GM12878 (cell line): ENCODE measurements at regions of chr19 and their contacts with region 1.

Region 1: DNA sequence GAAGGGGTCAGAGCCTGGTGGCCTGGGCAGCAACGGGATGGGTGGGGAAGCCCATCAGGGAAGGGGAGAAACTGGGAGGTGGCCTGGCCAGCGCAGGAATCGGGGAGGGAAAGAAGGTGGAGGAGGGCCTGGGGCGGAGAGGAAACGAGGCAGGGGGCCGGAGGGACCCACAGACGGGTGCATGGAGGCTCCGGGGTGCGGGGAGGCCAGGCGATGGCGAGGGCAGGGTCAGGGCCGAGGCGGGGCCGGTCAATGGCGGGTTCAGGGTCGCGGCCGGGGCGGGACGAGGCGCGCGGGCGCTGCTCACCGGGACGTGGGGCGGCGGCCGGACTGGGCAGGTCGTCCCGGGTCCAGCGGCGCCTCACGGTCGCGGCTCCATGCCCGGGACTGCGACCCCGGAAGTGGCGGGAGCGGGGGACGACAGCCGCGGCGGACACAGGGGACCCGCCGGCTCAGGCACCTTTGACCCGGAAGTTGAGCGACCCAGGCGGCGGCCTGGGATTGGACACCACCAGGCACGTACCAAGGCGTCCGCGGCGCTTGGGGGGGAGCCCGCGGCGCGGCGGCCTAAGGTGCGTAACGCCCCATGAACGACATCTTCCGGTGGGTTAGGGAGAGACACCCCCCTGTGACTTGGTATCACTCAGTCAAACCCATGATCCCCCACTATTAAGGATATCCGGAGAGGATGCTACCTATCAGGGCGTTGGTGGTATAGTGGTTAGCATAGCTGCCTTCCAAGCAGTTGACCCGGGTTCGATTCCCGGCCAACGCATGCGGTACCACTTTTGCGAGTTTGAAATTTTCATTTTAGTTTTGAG is at the start of gene DPP9:
- DNase-seq: peak; percentile 100
- ATAC-seq: peak; percentile 96
- H3K4me3 ChIP-seq: peak within 1 kb of the TSS; percentile 100
- H3K27ac ChIP-seq: peak within 1 kb of the TSS; percentile 89
- H3K4me1 ChIP-seq: peaks cover 18% of the 10 kb centered on the region
- H3K27me3 ChIP-seq: no peaks in the 10 kb centered on the region
- CTCF ChIP-seq: peak in 2 of 3 experiments; percentile 21 to 41; a peak in 2 of 6 replicates
- EP300 ChIP-seq: peak; percentile 48 to 85; a peak in 3 of 4 replicates
- POLR2A ChIP-seq: peak; percentile 76
- RAD21 ChIP-seq: no peak
- polyA plus RNA-seq, gene DPP9: 0.64 to 1.2 TPM

Region 2: GRCh38 chr19:4471403-4472173 is 252.0 kb before region 1 on chr19:
- CTCF ChIA-PET with region 1: no interaction called
- POLR2A ChIA-PET with region 1: no interaction called
- RAD21 ChIA-PET with region 1: no interaction called
- SMC1A ChIA-PET with region 1: no interaction called
- in situ Hi-C with region 1: no loop called
- intact Hi-C with region 1: loop called (anchors 5 kb)
- DNase-seq: peak; percentile 100
- ATAC-seq: peak; percentile 94
- H3K4me3 ChIP-seq: peak overlapping the region; percentile 99
- H3K27ac ChIP-seq: peak overlapping the region; percentile 90
- H3K4me1 ChIP-seq: peaks cover 7% of the 10 kb centered on the region
- H3K27me3 ChIP-seq: no peaks in the 10 kb centered on the region
- CTCF ChIP-seq: no peak
- EP300 ChIP-seq: no peak
- POLR2A ChIP-seq: 0 out of 2 replicates have a peak, but pooled peaks have one; percentile 49
- RAD21 ChIP-seq: no peak